CD4-positive, alpha-beta T cell (primary cell): ENCODE measurements at regions of chr1 and their contacts with region 1.

Region 1: DNA sequence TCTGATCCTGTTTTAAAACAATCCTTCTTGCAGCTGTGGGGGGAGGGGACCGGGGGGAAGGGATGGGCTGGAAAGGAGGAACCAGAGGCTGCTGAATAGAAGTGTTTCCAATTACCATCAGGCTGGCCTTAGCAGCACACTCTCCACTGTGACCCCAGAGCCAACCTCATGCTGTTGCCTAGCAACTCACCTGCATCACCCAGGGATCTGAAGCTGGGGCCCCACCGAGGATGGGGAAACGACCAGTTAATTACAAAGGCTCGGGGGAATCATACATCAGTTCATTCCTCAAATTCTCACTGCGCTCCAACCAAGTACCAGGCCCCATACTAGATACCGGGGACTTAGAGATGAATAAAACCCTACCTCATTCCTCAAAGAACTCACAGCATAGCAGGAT is 11.9 kb upstream of the GPX7 start:
- DNase-seq: no peak
- ATAC-seq: no peak
- H3K4me3 ChIP-seq: no peak overlapping the region
- H3K4me3 Mint-ChIP-seq: no peak overlapping the region
- H3K27ac ChIP-seq: no peak overlapping the region
- H3K27ac Mint-ChIP-seq: no peak overlapping the region
- H3K4me1 ChIP-seq: no peaks in the 10 kb centered on the region
- H3K4me1 Mint-ChIP-seq: no peaks in the 10 kb centered on the region
- H3K27me3 ChIP-seq: no peaks in the 10 kb centered on the region
- H3K27me3 Mint-ChIP-seq: no peaks in the 10 kb centered on the region
- CTCF ChIP-seq: no peak

Region 2: DNA sequence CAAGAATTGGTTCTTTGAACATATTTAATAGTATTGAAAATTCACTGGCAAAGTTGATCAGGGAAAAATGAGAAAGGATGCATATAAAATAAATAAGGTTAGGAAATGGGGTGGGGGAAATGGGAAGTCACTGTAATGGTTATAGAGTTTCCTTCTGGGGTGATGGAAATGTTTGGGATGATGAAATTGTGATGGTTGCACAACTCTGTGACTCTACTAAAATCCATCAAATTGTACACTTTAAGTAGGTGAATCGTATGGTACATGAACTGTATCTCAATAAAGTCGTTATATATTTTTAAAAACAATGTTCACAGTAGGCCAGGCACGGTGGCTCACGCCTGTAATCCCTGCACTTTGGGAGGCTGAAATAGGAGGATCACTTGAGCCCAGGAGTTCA is 195.9 kb after region 1 on chr1:
- CTCF ChIA-PET with region 1: no interaction called
- POLR2A ChIA-PET with region 1: no interaction called
- intact Hi-C with region 1: loop called in 1 of 2 experiments (anchors 10 kb)
- DNase-seq: no peak
- ATAC-seq: no peak
- H3K4me3 ChIP-seq: no peak overlapping the region
- H3K4me3 Mint-ChIP-seq: no peak overlapping the region
- H3K27ac ChIP-seq: no peak overlapping the region
- H3K27ac Mint-ChIP-seq: no peak overlapping the region
- H3K4me1 ChIP-seq: no peaks in the 10 kb centered on the region
- H3K4me1 Mint-ChIP-seq: no peaks in the 10 kb centered on the region
- H3K27me3 ChIP-seq: no peaks in the 10 kb centered on the region
- H3K27me3 Mint-ChIP-seq: no peaks in the 10 kb centered on the region
- CTCF ChIP-seq: no peak